ENCODE measurements at regions of chr16 and their contacts with region 1.

Region 1: GRCh38 chr16:79372503-79373184 is 227.9 kb downstream of the MAF start:
- DNase-seq: peak; percentile 0
- H3K4me3 ChIP-seq: no peak overlapping the region
- H3K27ac ChIP-seq: no peak overlapping the region
- H3K4me1 ChIP-seq: peaks cover 5% of the 10 kb centered on the region
- H3K27me3 ChIP-seq: no peaks in the 10 kb centered on the region
- CTCF ChIP-seq: no peak

Region 2: DNA sequence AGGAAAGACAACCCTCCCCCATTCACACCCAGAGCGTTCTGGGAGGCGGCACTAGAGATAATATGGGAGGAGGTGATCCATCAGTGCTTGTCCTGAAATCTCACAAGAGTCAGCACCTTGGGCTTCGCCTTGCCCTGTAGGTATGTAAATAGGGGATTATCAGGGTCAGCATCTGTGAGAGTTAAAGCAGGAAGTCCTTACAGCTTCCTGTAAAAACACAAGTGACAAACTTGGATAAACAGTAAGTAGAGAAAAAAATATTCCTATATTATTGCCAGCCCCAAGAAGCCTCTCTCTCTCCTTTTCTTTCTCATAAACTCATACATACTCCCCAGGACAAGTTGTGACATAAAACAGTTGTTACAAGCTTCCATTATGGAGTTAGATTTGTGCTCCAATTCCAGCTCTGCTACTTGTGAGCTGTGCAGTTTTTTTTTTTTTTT is 40.2 kb after region 1 on chr16:
- CTCF ChIA-PET with region 1: no interaction called
- dilution Hi-C with region 1: loop called (anchors 5 kb)
- in situ Hi-C with region 1: no loop called
- intact Hi-C with region 1: no loop called
- DNase-seq: no peak
- H3K4me3 ChIP-seq: no peak overlapping the region
- H3K27ac ChIP-seq: no peak overlapping the region
- H3K4me1 ChIP-seq: no peaks in the 10 kb centered on the region
- H3K27me3 ChIP-seq: no peaks in the 10 kb centered on the region
- CTCF ChIP-seq: no peak